CD4-positive, alpha-beta T cell (primary cell): ENCODE measurements at regions of chr9 and their contacts with region 1.

Region 1: GRCh38 chr9:136482793-136483588 is at the start of gene SEC16A:
- DNase-seq: peak; percentile 98 to 100 (median 100)
- ATAC-seq: peak; percentile 72
- H3K4me3 ChIP-seq: peak within 1 kb of the TSS; percentile 63
- H3K4me3 Mint-ChIP-seq: peak within 1 kb of the TSS; percentile 100
- H3K27ac ChIP-seq: peak within 1 kb of the TSS; percentile 97 to 99
- H3K27ac Mint-ChIP-seq: peak within 1 kb of the TSS; percentile 99
- H3K4me1 ChIP-seq: peaks cover 36% of the 10 kb centered on the region
- H3K4me1 Mint-ChIP-seq: peaks cover 49% of the 10 kb centered on the region
- H3K27me3 ChIP-seq: no peaks in the 10 kb centered on the region
- H3K27me3 Mint-ChIP-seq: no peaks in the 10 kb centered on the region
- CTCF ChIP-seq: no peak
- total RNA-seq, gene SEC16A: 73.0 to 75.0 TPM

Region 2: GRCh38 chr9:136400038-136400834 is 82.8 kb before region 1 on chr9 and contains the start of gene SNAPC4:
- CTCF ChIA-PET with region 1: no interaction called
- POLR2A ChIA-PET with region 1: no interaction called
- intact Hi-C with region 1: loop called in 1 of 2 experiments (anchors 2 kb)
- DNase-seq: peak; percentile 75 to 95 (median 86)
- ATAC-seq: peak; percentile 66
- H3K4me3 ChIP-seq: peak within 1 kb of the TSS; percentile 72
- H3K4me3 Mint-ChIP-seq: peak within 1 kb of the TSS; percentile 88
- H3K27ac ChIP-seq: no peak within 1 kb of the TSS
- H3K27ac Mint-ChIP-seq: peak within 1 kb of the TSS; percentile 55
- H3K4me1 ChIP-seq: peaks cover 59% of the 10 kb centered on the region
- H3K4me1 Mint-ChIP-seq: peaks cover 41% of the 10 kb centered on the region
- H3K27me3 ChIP-seq: no peaks in the 10 kb centered on the region
- H3K27me3 Mint-ChIP-seq: no peaks in the 10 kb centered on the region
- CTCF ChIP-seq: peak; percentile 87
- total RNA-seq, gene SNAPC4: 7.7 to 8.0 TPM

Region 3: GRCh38 chr9:136539427-136540421 is 56.7 kb after region 1 on chr9:
- CTCF ChIA-PET with region 1: interaction called, 10 read pairs
- POLR2A ChIA-PET with region 1: interaction called, 25 read pairs
- intact Hi-C with region 1: loop called in 1 of 2 experiments (anchors 5 kb)
- DNase-seq: peak; percentile 54 to 95 (median 90)
- ATAC-seq: peak; percentile 68
- H3K4me3 ChIP-seq: peak overlapping the region; percentile 50
- H3K4me3 Mint-ChIP-seq: peak overlapping the region; percentile 91
- H3K27ac ChIP-seq: peak overlapping the region; percentile 94
- H3K27ac Mint-ChIP-seq: peak overlapping the region; percentile 97
- H3K4me1 ChIP-seq: peaks cover 94% of the 10 kb centered on the region
- H3K4me1 Mint-ChIP-seq: peaks cover 57% of the 10 kb centered on the region
- H3K27me3 ChIP-seq: no peaks in the 10 kb centered on the region
- H3K27me3 Mint-ChIP-seq: no peaks in the 10 kb centered on the region
- CTCF ChIP-seq: no peak

Region 4: DNA sequence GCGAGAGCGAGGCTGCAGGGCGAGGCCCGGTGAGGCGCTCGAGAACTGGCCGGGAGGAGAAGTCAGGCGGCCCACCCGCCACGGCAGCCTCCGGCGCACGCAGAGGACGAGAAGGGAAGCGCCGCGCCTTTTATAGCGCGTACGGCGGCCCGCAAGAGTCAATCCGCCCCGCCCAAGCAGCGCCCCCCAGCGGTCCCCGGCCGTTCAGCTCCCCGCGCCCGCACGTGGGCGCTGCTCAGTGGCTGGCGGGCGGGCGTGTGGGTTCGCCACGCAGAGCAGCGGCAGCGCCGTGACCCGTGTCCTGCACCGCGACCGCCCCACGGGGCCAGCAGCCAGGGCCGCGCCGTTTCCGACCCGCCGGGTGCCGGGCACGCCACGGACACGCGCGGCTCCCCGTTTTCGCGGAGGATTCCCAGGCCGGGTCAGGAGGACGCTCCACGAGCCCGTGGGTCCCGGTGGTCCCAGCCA is 245.1 kb after region 1 on chr9:
- CTCF ChIA-PET with region 1: no interaction called
- POLR2A ChIA-PET with region 1: interaction called, 5 read pairs
- intact Hi-C with region 1: loop called in 1 of 2 experiments (anchors 2 kb)
- DNase-seq: peak; percentile 84 to 97 (median 94)
- ATAC-seq: peak; percentile 73
- H3K4me3 ChIP-seq: peak overlapping the region; percentile 94
- H3K4me3 Mint-ChIP-seq: peak overlapping the region; percentile 74
- H3K27ac ChIP-seq: peak overlapping the region in 1 of 2 donors; percentile 65
- H3K27ac Mint-ChIP-seq: peak overlapping the region; percentile 92
- H3K4me1 ChIP-seq: peaks cover 40% of the 10 kb centered on the region
- H3K4me1 Mint-ChIP-seq: peaks cover 24% of the 10 kb centered on the region
- H3K27me3 ChIP-seq: no peaks in the 10 kb centered on the region
- H3K27me3 Mint-ChIP-seq: peaks cover 7% of the 10 kb centered on the region
- CTCF ChIP-seq: peak; percentile 80